Thyroid gland (tissue), 4 donors: ENCODE measurements at regions of chr10 and their contacts with region 1.

Region 1: GRCh38 chr10:30002104-30002950 is 57.1 kb downstream of the JCAD start:
- DNase-seq: peak; percentile 88 to 90
- H3K4me3 ChIP-seq: no peak overlapping the region
- H3K27ac ChIP-seq: peak overlapping the region in 2 of 3 donors; percentile 30 to 57
- H3K4me1 ChIP-seq: peaks cover 0 to 31% of the 10 kb centered on the region in 2 donors
- H3K27me3 ChIP-seq: no peaks in the 10 kb centered on the region
- CTCF ChIP-seq: peak; percentile 69 to 91 (median 83)
- POLR2A ChIP-seq: no peak

Region 2: GRCh38 chr10:29941476-29941875 is 60.9 kb before region 1 on chr10:
- intact Hi-C with region 1: no loop called
- DNase-seq: no peak
- H3K4me3 ChIP-seq: no peak overlapping the region
- H3K27ac ChIP-seq: no peak overlapping the region
- H3K4me1 ChIP-seq: peaks cover 6 to 8% of the 10 kb centered on the region in 2 donors
- H3K27me3 ChIP-seq: no peaks in the 10 kb centered on the region
- CTCF ChIP-seq: no peak
- POLR2A ChIP-seq: no peak

Region 3: GRCh38 chr10:30241422-30242110 is 239.2 kb after region 1 on chr10:
- intact Hi-C with region 1: loop called (anchors 5 kb)
- DNase-seq: no peak
- H3K4me3 ChIP-seq: no peak overlapping the region
- H3K27ac ChIP-seq: no peak overlapping the region
- H3K4me1 ChIP-seq: no peaks in the 10 kb centered on the region
- H3K27me3 ChIP-seq: no peaks in the 10 kb centered on the region
- CTCF ChIP-seq: no peak
- POLR2A ChIP-seq: no peak